Activated CD4-positive, alpha-beta T cell treated with anti-CD3 and anti-CD28 coated beads for 36 hours (primary cell): ENCODE measurements at regions of chr13 and their contacts with region 1.

Region 1: DNA sequence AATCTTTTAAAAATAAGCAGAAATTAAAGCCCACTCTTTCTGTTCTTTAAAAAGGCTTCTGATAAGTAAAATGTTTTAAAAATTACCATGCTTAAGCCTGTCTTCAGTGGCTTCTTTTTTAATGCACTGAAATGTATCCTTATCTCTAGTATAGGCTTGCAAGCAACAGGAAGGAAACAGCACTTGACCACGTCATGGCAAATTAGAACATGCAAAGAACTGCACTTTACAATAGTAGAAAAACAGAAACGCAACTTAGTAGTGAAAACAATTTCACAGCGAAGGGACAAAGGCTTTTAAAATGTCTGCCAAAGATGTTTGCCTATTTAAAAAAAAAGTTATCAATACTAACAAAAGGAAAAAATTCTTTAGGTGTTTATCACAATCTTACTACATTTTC is 36.3 kb downstream of the ELF1 start:
- DNase-seq: peak; percentile 70
- ATAC-seq: peak; percentile 62
- H3K4me3 Mint-ChIP-seq: peak overlapping the region; percentile 91
- H3K27ac Mint-ChIP-seq: peak overlapping the region; percentile 92
- H3K4me1 Mint-ChIP-seq: peaks cover 66% of the 10 kb centered on the region
- H3K27me3 Mint-ChIP-seq: no peaks in the 10 kb centered on the region

Region 2: GRCh38 chr13:40728595-40728994 is 254.2 kb before region 1 on chr13:
- CTCF ChIA-PET with region 1: no interaction called
- POLR2A ChIA-PET with region 1: no interaction called
- intact Hi-C with region 1: no loop called
- DNase-seq: no peak
- ATAC-seq: no peak
- H3K4me3 Mint-ChIP-seq: no peak overlapping the region
- H3K27ac Mint-ChIP-seq: no peak overlapping the region
- H3K4me1 Mint-ChIP-seq: peaks cover 3% of the 10 kb centered on the region
- H3K27me3 Mint-ChIP-seq: no peaks in the 10 kb centered on the region

Region 3: DNA sequence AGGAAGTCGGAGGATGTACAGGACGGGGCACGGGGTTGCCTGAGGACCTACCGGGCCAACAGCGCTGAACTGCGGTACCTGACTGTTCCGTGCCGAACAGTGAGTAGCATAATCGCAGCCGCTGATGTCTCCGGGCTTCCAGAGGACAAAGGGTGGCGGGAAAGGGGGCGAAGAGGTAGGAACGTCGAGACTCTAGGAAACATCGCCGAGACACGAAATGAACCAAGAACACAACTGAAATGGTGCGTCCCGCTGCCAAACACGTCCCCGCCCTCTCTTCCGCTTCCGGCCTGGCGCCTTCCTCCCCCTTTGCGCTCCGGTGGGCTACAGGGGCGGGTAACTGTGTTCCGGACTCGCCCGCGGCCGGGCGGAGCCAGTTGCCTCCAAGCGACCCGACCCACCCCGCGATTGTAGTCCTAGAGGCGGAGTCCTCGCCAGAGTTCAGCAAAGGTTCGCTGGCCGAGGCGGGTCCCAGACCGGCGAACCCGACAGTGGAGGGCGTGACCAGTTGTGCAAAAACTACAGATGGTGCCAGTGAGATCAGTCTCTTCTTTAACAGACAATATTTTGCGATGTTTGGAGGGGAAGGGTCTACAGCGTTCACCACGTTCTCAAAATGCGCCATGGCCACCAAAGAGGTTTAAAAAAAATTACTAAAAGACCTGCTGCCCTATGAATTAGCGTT is 211.7 kb before region 1 on chr13 and contains the start of gene MRPS31:
- CTCF ChIA-PET with region 1: no interaction called
- POLR2A ChIA-PET with region 1: no interaction called
- intact Hi-C with region 1: loop called (anchors 2 to 10 kb)
- DNase-seq: peak; percentile 97
- ATAC-seq: peak; percentile 99
- H3K4me3 Mint-ChIP-seq: peak within 1 kb of the TSS; percentile 89
- H3K27ac Mint-ChIP-seq: peak within 1 kb of the TSS; percentile 97
- H3K4me1 Mint-ChIP-seq: peaks cover 30% of the 10 kb centered on the region
- H3K27me3 Mint-ChIP-seq: no peaks in the 10 kb centered on the region
- total RNA-seq, gene MRPS31: 45.8 to 46.1 TPM

Region 4: GRCh38 chr13:40992678-40993518 is 10.1 kb after region 1 on chr13:
- CTCF ChIA-PET with region 1: interaction called, 10 read pairs
- POLR2A ChIA-PET with region 1: interaction called, 6 read pairs
- intact Hi-C with region 1: no loop called
- DNase-seq: no peak
- ATAC-seq: no peak
- H3K4me3 Mint-ChIP-seq: no peak overlapping the region
- H3K27ac Mint-ChIP-seq: peak overlapping the region; percentile 84
- H3K4me1 Mint-ChIP-seq: peaks cover 86% of the 10 kb centered on the region
- H3K27me3 Mint-ChIP-seq: no peaks in the 10 kb centered on the region

Region 5: DNA sequence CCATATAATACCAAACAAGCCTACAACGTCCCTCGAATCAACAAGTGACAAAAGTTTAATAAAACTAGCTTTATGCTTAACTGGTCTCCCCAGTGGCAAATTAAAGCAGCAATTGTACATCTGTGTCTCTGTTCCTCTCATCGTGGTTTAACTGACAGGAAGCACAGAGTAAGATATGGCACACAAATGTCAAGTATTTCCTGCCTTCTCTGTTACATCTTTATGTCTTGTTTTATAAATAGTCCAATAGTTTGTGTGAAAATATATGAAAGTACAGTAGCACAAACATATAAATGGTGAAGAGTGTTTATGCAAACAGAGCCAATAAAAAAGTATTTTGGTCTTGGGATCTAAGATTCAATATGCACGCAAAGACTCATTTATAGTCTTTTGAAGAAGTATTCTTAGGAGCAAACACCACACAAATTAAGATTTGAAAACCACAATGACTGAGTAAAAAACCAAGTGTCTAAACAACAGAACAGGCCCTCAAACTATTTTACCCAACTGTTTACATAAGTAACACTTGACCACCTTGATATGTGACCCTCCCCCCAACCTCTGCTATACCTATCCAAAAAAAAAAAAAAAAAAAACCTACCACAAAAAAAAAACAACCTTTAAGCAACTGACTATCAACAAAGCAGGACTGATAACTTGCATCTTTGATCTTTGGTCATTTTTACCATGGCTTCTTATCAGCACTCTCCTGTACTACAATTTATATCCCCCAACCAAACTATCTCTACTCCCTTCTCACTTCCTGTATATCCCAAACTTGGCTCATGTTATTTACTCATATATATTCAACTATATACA is 22.3 kb after region 1 on chr13:
- CTCF ChIA-PET with region 1: interaction called, 16 read pairs
- POLR2A ChIA-PET with region 1: no interaction called
- intact Hi-C with region 1: loop called (anchors 1 kb)
- DNase-seq: no peak
- ATAC-seq: peak; percentile 76
- H3K4me3 Mint-ChIP-seq: peak overlapping the region; percentile 29
- H3K27ac Mint-ChIP-seq: peak overlapping the region; percentile 93
- H3K4me1 Mint-ChIP-seq: peaks cover 63% of the 10 kb centered on the region
- H3K27me3 Mint-ChIP-seq: no peaks in the 10 kb centered on the region